Endothelial cell of umbilical vein (primary cell): ENCODE measurements at regions of chr21 and their contacts with region 1.

Region 1: GRCh38 chr21:32826329-32827167 is 55.0 kb upstream of the PAXBP1 start:
- DNase-seq: peak; percentile 64
- H3K4me3 ChIP-seq: no peak overlapping the region
- H3K27ac ChIP-seq: no peak overlapping the region
- H3K4me1 ChIP-seq: no peaks in the 10 kb centered on the region
- H3K27me3 ChIP-seq: peaks cover 3% of the 10 kb centered on the region in 2 experiments
- CTCF ChIP-seq: peak; percentile 48 to 55
- POLR2A ChIP-seq: no peak

Region 2: GRCh38 chr21:32653311-32653901 is 173.1 kb before region 1 on chr21:
- CTCF ChIA-PET with region 1: interaction called, 15 read pairs
- POLR2A ChIA-PET with region 1: no interaction called
- dilution Hi-C with region 1: no loop called
- intact Hi-C with region 1: loop called (anchors 1 kb)
- DNase-seq: peak; percentile 59
- H3K4me3 ChIP-seq: no peak overlapping the region
- H3K27ac ChIP-seq: no peak overlapping the region
- H3K4me1 ChIP-seq: no peaks in the 10 kb centered on the region
- H3K27me3 ChIP-seq: no peaks in the 10 kb centered on the region
- CTCF ChIP-seq: peak; percentile 54 to 69
- POLR2A ChIP-seq: no peak

Region 3: DNA sequence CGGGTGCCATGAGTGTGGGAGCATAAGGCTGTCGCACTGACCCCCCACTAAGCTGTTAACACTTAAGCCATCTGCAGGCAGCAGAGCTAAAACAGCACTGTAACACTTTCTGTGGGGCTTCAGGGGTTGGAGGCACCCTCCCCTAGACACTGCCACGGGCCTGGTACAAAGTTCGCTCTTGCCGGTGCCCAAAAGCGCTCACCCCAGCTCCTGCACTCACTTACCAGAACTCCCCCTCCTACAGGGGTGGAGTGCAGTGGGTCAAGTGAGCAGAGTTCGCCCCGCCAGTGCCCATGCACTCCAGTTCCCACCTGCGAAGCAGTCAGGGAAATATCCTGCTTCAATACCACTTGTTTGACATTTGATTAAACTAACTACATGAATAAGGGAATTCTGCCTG is 168.0 kb before region 1 on chr21:
- CTCF ChIA-PET with region 1: interaction called, 15 read pairs
- POLR2A ChIA-PET with region 1: no interaction called
- dilution Hi-C with region 1: no loop called
- intact Hi-C with region 1: loop called (anchors 1 kb)
- DNase-seq: no peak
- H3K4me3 ChIP-seq: no peak overlapping the region
- H3K27ac ChIP-seq: no peak overlapping the region
- H3K4me1 ChIP-seq: no peaks in the 10 kb centered on the region
- H3K27me3 ChIP-seq: no peaks in the 10 kb centered on the region
- CTCF ChIP-seq: no peak
- POLR2A ChIP-seq: no peak

Region 4: GRCh38 chr21:32687643-32688345 is 138.8 kb before region 1 on chr21:
- CTCF ChIA-PET with region 1: interaction called, 4 read pairs
- POLR2A ChIA-PET with region 1: no interaction called
- dilution Hi-C with region 1: no loop called
- intact Hi-C with region 1: loop called (anchors 1 kb)
- DNase-seq: peak; percentile 69
- H3K4me3 ChIP-seq: no peak overlapping the region
- H3K27ac ChIP-seq: no peak overlapping the region
- H3K4me1 ChIP-seq: peaks cover 7% of the 10 kb centered on the region
- H3K27me3 ChIP-seq: no peaks in the 10 kb centered on the region
- CTCF ChIP-seq: no peak
- POLR2A ChIP-seq: no peak

Region 5: DNA sequence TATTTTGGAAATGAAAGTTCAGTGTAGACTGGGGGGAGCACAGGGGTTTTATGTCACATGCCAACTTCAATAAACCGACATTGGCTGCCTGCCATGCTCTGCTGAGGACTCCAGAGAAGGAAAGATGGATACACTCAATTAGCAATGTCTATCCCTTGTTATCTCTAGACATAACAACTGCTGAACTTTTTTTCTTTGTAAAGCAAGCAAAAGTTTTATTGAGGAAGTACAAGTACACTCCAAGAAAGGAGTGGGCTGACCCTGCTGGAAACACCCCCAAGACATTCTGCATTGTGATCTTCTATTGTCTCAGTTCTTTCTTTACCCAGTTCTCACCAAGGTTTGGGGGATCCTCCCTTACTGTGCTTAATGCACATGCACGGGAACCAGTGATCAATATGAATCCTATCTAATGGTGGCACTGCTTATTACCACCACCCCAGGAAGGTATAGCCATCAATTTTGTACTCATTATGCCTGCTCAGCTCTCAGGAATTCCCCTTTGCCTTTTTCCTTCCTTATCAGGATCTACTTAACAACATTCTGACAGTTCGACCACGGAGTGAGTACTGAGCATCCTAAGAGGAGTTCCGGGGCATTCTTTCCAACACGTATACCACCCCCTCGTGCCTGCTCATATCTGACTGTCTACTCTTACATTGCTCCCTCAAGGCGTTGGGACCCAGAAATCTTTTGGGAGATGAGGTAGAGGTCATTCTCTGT is 127.4 kb before region 1 on chr21:
- CTCF ChIA-PET with region 1: no interaction called
- POLR2A ChIA-PET with region 1: no interaction called
- dilution Hi-C with region 1: no loop called
- intact Hi-C with region 1: no loop called
- DNase-seq: peak; percentile 61
- H3K4me3 ChIP-seq: no peak overlapping the region
- H3K27ac ChIP-seq: peak overlapping the region; percentile 6
- H3K4me1 ChIP-seq: peaks cover 32% of the 10 kb centered on the region
- H3K27me3 ChIP-seq: no peaks in the 10 kb centered on the region
- CTCF ChIP-seq: no peak
- POLR2A ChIP-seq: no peak

Region 6: DNA sequence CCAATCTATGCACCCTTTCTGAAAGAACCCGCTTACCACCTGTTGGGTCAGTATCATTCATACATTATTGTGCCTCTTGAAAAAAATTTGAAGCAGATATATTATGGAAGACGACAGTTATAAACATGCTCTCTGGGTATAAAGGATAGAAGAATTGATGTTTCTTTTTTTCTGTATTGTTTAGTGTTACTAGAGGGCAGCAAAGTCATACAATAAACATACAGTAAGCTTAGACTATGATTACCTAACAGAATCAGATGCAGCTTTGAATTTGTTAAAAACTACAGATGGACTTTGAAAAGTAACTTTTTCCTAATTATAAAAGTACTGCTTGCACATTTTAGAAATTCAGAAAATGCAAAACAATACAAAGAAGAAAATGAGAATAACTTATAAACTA is 43.9 kb before region 1 on chr21:
- CTCF ChIA-PET with region 1: interaction called, 54 read pairs
- POLR2A ChIA-PET with region 1: no interaction called
- dilution Hi-C with region 1: no loop called
- intact Hi-C with region 1: no loop called
- DNase-seq: no peak
- H3K4me3 ChIP-seq: no peak overlapping the region
- H3K27ac ChIP-seq: no peak overlapping the region
- H3K4me1 ChIP-seq: no peaks in the 10 kb centered on the region
- H3K27me3 ChIP-seq: peaks cover 0 to 2% of the 10 kb centered on the region in 2 experiments
- CTCF ChIP-seq: no peak
- POLR2A ChIP-seq: no peak